Activated CD8-positive, alpha-beta memory T cell treated with anti-CD3 and anti-CD28 coated beads, Interleukin-2, amount 10 ng/mL, durations not matched to agents 7 days and 5 days (primary cell): ENCODE measurements at regions of chr16 and their contacts with region 1.

Region 1: DNA sequence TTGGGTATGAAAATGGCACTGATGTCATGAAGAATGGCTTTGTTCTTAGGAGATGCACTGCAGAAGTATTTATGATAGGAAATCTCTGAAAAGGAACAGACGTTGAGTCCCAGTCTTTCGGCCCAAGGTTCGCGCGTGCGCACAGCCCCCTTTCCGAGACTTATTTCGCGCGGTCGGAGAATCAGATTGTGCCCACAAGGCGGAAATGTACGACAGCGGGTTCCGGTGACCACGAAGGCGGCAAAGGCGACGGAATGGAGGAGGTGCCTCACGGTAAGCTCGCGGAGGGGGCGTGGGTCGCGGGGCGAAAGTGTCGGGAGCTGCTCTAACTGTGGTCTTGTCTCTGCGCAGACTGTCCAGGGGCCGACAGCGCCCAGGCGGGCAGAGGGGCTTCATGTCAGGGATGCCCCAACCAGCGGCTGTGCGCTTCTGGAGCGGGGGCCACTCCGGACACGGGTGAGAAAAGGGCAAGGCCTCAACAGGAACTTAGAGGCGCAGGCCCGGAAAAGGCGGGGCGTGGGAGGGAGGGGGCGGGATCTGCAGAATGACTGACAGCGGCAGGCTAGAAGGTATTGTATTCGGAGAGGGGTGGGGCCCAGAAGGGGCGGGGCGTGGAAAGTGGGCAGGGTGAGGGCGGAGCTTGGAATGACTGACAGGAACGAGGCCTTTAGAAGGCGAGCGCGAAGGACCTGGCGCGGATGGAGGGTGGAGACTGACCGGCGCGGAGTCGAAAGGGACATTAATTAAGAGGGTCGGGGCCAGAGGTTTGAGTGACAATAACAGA is at the start of gene NUBP1:
- DNase-seq: peak; percentile 100
- ATAC-seq: peak; percentile 91
- H3K4me3 Mint-ChIP-seq: peak within 1 kb of the TSS; percentile 85
- H3K27ac Mint-ChIP-seq: peak within 1 kb of the TSS; percentile 98
- H3K4me1 Mint-ChIP-seq: peaks cover 64% of the 10 kb centered on the region
- H3K27me3 Mint-ChIP-seq: no peaks in the 10 kb centered on the region
- total RNA-seq, gene NUBP1: 27.8 to 35.3 TPM

Region 2: GRCh38 chr16:10918294-10919002 is 174.6 kb after region 1 on chr16:
- CTCF ChIA-PET with region 1: interaction called, 15 read pairs
- DNase-seq: peak; percentile 91
- ATAC-seq: peak; percentile 72
- H3K4me3 Mint-ChIP-seq: no peak overlapping the region
- H3K27ac Mint-ChIP-seq: peak overlapping the region; percentile 42
- H3K4me1 Mint-ChIP-seq: peaks cover 12% of the 10 kb centered on the region
- H3K27me3 Mint-ChIP-seq: no peaks in the 10 kb centered on the region